Motor neuron (in vitro differentiated cells): ENCODE measurements at regions of chr20 and their contacts with region 1.

Region 1: DNA sequence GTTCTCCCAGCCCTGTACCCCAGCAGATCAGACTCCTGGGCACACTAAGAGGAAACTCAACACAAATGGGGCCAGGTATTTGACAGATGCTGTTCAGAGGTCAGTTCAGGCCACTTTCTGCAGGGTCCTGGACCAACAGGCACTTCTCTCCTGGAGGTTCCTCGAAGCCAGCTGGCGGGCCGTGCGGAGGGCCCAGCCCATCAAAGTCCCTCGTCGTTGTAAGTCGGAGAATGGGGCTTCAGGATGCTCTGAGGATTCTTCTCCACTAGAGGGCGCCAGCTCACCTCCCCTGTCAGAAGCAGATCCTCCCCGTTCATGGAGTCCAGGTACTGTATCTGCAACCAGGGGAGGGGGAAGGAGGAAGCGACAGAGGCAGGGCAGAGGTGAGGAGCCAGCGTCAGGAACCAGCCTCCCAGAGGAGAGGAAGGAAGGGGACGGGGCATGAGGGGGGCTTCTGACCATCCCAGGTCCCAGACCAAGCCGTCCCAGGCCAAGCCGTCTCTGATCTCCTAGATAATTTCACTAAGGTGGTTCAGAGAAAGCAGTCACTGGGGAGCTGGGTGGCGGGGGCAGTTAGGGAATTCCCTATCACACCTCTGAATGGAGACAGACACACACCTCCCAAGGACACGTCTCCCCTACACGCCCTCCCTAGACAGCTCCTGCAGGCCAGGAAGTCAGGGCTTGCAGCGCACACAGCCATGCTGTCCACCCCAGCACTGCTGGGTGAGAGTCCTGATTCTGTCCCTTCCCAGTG is 11.7 kb upstream of the FAM83C start:
- ATAC-seq: peak; percentile 30 to 80 (median 46)
- H3K4me3 ChIP-seq: no peak overlapping the region
- H3K27ac ChIP-seq: no peak overlapping the region
- H3K4me1 ChIP-seq: peaks cover 10 to 30% of the 10 kb centered on the region in 2 donors

Region 2: DNA sequence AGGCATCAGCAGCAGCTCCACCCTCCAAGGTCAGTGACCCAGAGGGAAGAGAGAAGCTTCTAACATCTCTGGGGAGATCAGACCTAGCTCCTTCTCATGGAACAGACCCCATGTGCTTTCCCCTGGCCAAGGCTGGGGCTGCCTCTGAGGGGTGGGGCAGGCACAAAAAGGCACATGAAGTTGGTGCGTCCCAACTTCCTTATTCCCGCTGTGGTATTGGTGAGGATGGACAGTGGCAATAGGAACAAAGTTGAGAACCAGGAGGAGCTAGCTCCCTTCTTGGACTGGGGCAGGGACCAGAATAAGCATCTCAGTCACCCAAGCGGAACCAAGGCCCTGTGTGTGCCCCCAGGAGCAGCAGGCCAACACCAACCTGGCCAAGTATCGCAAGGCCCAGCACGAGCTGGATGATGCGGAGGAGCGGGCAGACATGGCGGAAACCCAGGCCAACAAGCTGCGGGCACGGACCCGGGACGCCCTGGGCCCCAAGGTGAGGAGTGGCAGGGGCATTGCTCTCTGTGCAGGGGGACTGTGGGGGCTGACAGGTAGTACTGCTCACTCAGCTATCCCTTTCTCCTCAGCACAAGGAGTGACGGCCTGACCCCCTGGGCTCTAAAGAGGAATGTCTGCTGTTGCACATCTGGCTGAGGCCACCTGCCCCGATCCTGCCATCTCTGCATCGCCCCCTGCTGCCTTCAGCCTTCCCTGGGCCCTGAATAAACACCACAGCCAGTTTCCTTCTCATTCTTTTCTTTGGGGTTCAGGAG is 302.1 kb before region 1 on chr20:
- in situ Hi-C with region 1: no loop called
- ATAC-seq: peak in 2 of 8 experiments; percentile 21 to 31
- H3K4me3 ChIP-seq: no peak overlapping the region
- H3K27ac ChIP-seq: no peak overlapping the region
- H3K4me1 ChIP-seq: no peaks in the 10 kb centered on the region

Region 3: DNA sequence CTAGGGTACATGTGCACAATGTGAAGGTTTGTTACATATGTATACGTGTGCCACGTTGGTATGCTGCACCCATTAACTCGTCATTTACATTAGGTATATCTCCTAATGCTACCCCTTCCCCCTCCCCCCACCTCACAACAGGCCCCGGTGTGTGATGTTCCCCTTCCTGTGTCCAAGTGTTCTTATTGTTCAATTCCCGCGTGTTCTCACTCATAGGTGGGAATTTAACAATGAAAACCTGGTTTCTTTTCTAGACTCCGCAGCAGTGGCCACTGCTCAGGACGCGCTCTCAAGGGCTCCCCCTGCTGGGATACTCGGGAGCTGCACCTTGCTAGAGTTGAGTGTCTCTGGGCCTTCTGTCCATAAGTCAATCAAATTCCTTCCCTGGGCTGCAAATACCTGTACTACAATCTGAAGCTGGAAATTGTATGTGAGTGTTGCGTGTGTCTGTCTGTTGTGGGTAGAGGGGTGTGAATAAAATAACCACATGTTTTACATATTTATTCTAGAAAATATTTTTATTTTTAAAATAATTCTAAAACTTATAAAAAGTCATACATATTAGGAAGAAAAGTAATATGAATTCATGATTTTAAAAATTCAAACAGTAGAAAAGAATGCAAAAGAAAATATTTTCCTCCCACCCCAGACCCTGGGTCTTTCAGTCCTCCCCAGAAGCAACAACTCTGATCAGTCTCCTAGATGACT is 143.3 kb after region 1 on chr20:
- in situ Hi-C with region 1: loop called in 5 of 9 experiments (anchors 10 to 25 kb)
- ATAC-seq: peak; percentile 78 to 98 (median 92)
- H3K4me3 ChIP-seq: no peak overlapping the region
- H3K27ac ChIP-seq: no peak overlapping the region
- H3K4me1 ChIP-seq: no peaks in the 10 kb centered on the region

Region 4: GRCh38 chr20:35454881-35455609 is 151.1 kb after region 1 on chr20 and contains the start of gene CEP250:
- in situ Hi-C with region 1: loop called in 1 of 9 experiments (anchors 10 kb)
- ATAC-seq: peak; percentile 84 to 96 (median 93)
- H3K4me3 ChIP-seq: peak within 1 kb of the TSS; percentile 52 to 74 (median 63)
- H3K27ac ChIP-seq: peak within 1 kb of the TSS; percentile 98 to 100
- H3K4me1 ChIP-seq: peaks cover 12% of the 10 kb centered on the region in 2 donors
- total RNA-seq, gene CEP250: 11.7 to 31.7 (median 28.5) TPM